SK-N-SH (cell line): ENCODE measurements at regions of chr4 and their contacts with region 1.

Region 1: GRCh38 chr4:112604589-112604988 is 32.1 kb downstream of the ZGRF1 start:
- DNase-seq: peak; percentile 62
- H3K4me3 ChIP-seq: no peak overlapping the region
- H3K27ac ChIP-seq: no peak overlapping the region
- H3K4me1 ChIP-seq: no peaks in the 10 kb centered on the region
- H3K27me3 ChIP-seq: no peaks in the 10 kb centered on the region
- CTCF ChIP-seq: peak; percentile 81
- EP300 ChIP-seq: no peak
- RAD21 ChIP-seq: peak; percentile 97

Region 2: GRCh38 chr4:112521123-112522023 is 83.2 kb before region 1 on chr4:
- CTCF ChIA-PET with region 1: interaction called, 12 read pairs
- POLR2A ChIA-PET with region 1: no interaction called
- DNase-seq: no peak
- H3K4me3 ChIP-seq: peak overlapping the region; percentile 6 to 26; a peak in 2 of 4 replicates
- H3K27ac ChIP-seq: no peak overlapping the region
- H3K4me1 ChIP-seq: peaks cover 5 to 20% of the 10 kb centered on the region in 2 experiments; a peak in 2 of 4 replicates
- H3K27me3 ChIP-seq: peaks cover 41% of the 10 kb centered on the region; the same call in 1 of the 2 replicates
- CTCF ChIP-seq: no peak
- EP300 ChIP-seq: no peak
- RAD21 ChIP-seq: no peak

Region 3: GRCh38 chr4:112589206-112589605 is 15.4 kb before region 1 on chr4:
- CTCF ChIA-PET with region 1: interaction called, 16 read pairs
- POLR2A ChIA-PET with region 1: no interaction called
- DNase-seq: no peak
- H3K4me3 ChIP-seq: no peak overlapping the region
- H3K27ac ChIP-seq: no peak overlapping the region
- H3K4me1 ChIP-seq: peaks cover 0 to 8% of the 10 kb centered on the region in 2 experiments; a peak in 2 of 4 replicates
- H3K27me3 ChIP-seq: no peaks in the 10 kb centered on the region
- CTCF ChIP-seq: no peak
- EP300 ChIP-seq: no peak
- RAD21 ChIP-seq: no peak

Region 4: DNA sequence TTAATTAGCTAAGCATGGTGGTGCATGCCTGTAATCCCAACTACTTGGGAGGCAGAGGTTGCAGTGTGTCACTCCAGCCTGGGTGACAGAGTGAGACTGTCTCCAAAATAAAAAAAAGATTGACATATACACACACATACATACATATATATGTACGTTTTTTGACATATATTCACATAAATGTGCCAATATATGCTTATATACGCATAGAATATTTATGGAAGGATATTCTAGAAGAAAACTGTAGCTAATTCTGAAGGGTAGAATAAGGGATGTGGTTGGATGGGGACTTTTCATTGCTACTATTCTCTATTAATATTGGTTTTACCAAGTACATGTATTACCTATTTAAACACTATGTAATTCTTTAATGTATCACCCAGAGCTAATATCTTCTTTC is 12.4 kb after region 1 on chr4:
- CTCF ChIA-PET with region 1: interaction called, 17 read pairs
- POLR2A ChIA-PET with region 1: no interaction called
- DNase-seq: no peak
- H3K4me3 ChIP-seq: no peak overlapping the region
- H3K27ac ChIP-seq: no peak overlapping the region
- H3K4me1 ChIP-seq: no peaks in the 10 kb centered on the region
- H3K27me3 ChIP-seq: no peaks in the 10 kb centered on the region
- CTCF ChIP-seq: no peak
- EP300 ChIP-seq: no peak
- RAD21 ChIP-seq: no peak

Region 5: DNA sequence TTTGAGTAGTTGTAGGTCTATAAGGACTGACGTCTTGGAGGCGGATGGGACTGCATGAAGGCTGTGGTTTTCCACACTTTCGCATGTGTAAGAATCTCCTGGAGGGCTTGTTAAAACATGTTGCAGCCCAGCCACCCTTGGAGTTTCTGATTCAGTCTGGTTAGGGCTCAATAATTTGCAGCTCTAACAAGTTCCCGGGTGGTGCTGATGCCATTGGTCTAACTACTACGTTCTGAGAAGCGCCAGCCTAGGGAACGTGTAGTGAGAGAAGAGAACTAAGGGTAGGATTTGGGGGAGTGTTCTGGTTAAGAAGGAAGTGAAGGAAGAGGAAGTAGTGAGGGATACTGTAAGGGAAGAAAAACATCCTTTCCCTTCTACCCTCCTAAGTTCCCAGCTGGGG is 171.2 kb after region 1 on chr4:
- CTCF ChIA-PET with region 1: no interaction called
- POLR2A ChIA-PET with region 1: no interaction called
- DNase-seq: no peak
- H3K4me3 ChIP-seq: no peak overlapping the region
- H3K27ac ChIP-seq: no peak overlapping the region
- H3K4me1 ChIP-seq: no peaks in the 10 kb centered on the region
- H3K27me3 ChIP-seq: no peaks in the 10 kb centered on the region
- CTCF ChIP-seq: no peak
- EP300 ChIP-seq: no peak
- RAD21 ChIP-seq: no peak